ENCODE measurements at regions of chr2 and their contacts with region 1.

Region 1: GRCh38 chr2:86649119-86649947 is 25.7 kb upstream of the RNF103 start:
- DNase-seq: no peak
- CTCF ChIP-seq: no peak

Region 2: DNA sequence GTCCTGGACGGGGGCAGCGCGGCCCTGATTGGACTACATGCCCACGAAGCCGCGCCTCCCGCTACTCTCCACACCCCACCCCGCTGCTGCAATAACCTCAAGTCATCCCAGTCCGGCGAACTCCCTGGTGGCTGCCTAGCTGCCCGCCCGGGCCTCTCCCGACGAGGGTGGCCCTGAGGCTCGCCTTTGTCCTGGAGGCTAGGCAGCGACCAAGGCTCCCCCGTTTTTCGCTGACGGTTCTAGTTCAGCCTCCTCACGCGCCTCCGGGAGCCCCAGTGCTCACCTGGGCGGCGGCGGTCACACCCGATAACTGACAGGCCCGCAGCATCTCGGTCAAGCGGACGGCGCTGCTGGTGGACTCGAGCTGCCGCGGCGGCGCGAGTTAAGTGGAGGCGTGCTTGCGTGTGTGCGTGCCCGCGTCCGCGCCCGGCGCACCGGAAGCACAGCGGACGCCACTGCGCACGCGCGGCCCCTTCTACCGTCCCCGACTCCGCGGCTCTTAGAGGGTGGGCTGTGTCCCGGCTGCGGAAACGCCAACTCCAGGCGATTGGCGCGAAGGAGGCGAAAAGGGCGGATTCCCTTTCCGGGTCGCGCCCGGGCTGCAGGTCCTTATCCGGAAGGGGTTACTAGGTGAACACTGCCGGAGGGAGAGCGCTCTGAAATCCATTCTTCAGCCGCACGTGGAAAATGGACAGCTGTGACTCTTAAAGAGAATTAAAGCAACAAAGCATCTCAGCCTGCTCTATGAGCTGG is 454.1 kb before region 1 on chr2 and contains the start of gene IMMT:
- in situ Hi-C with region 1: loop called (anchors 10 kb)
- DNase-seq: peak; percentile 95
- CTCF ChIP-seq: no peak

Region 3: DNA sequence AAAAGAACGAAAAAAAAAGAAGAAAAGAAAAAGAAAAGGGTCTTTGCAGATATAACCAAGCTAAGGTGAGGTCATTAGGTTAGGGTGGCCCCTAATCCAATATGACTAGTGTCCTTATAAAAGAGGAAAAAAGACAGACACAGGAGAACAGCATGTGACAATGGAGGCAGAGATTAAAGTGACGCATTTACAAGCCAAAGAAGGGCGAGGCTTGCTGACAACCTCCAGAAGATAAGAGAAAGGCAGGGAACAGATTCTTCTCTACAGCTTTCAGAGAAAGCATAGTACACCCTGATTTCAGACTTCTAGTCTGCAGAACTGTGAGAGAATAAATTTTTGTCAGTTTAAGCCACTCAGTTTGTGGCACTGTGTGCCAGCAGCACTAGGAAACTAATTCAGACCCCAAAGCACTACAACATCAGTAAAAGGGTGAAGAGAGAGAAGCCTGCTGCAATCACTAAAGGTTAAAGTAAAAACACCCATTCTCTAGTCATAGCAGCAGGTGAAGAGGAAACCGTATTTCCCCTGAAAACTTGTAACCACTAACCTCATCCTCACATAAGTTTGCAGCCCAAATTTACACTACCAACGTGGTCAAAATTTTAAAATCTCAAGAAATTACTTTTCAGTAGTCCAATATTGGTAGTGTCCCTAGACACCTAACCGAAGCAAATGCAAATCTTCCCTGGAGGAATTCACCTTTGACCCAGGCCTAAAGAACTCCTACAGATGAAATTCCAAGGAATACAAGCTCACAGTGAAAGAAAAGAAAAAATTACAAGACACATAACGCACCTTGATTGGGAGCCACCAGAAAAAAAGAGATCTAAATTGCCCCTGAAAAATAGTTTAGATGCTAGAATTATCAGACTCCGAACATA is 329.4 kb before region 1 on chr2:
- in situ Hi-C with region 1: no loop called
- DNase-seq: no peak
- CTCF ChIP-seq: no peak

Region 4: DNA sequence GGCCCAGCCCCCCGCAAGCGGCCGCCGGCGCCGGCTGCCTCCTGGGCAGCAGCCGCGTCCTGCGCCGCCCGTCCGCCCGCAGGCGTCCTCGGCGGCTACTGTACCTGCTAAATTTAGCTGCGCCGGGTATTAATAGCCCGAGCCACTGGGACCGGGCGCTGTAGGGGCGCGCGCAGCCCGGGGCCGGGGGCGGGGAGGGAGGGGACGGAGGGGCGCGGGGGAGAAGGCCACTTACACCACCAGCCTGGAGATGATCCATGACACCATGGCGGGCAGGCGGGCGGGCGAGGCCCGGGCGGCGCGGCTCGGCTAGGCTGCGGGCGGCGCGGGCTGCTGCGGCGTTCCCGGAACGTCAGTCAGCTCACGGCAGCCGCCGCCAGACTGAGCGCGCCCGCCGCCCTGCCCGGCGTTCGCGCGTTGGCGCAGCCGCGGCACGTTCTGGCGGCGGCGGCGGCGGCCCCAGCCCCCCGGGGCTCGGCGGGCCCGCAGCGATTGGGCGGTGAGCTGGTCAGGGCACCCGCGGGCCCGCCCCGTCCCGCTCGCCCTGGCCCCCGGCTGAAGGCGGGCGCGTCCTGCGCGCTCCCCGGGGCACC is 312.0 kb before region 1 on chr2 and contains the start of gene REEP1:
- in situ Hi-C with region 1: no loop called
- DNase-seq: peak; percentile 63
- CTCF ChIP-seq: no peak